ENCODE measurements at regions of chr3 and their contacts with region 1.

Region 1: GRCh38 chr3:73094125-73094524 is 32.7 kb downstream of the EBLN2 start:
- DNase-seq: no peak
- H3K4me3 ChIP-seq: no peak overlapping the region
- H3K27ac ChIP-seq: no peak overlapping the region
- H3K4me1 ChIP-seq: no peaks in the 10 kb centered on the region
- H3K27me3 ChIP-seq: no peaks in the 10 kb centered on the region
- CTCF ChIP-seq: no peak
- EP300 ChIP-seq: no peak
- POLR2A ChIP-seq: no peak

Region 2: DNA sequence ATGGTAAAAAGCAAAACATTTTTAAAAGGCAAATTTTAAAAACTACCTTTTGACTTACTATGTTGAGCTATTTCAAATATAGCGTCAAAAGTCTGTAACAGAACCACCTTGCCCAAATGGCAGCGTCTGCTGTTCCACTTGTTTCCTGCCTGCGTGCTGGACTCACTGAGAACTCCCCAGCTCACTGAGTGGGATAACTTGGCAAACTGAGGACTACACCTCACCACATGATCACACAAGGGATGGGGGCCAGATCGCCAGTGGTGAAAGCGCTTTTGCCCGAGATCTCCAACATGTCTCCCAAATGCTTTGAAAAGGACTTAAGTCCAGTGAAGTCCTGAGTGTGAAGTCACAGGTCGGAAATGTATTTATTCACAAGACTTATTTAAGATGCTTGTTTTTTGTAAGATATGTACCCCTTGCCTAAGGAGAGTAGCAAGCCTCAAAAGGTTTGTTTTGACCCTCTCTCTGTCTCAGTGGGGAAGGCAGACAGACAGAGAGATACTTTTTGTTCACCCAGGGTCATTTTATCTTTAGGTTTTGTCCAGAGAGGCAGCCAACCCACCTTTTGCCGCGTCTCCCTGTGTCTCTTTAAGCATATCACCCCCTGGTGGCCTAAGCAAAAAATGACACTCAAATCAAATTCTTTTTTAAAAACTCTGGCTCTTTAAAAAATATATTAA is 338.0 kb after region 1 on chr3:
- in situ Hi-C with region 1: no loop called
- intact Hi-C with region 1: loop called (anchors 5 kb)
- DNase-seq: no peak
- H3K4me3 ChIP-seq: no peak overlapping the region
- H3K27ac ChIP-seq: peak overlapping the region; percentile 8 to 56 (median 30)
- H3K4me1 ChIP-seq: peaks cover 0 to 31% (median 6%) of the 10 kb centered on the region in 4 donors
- H3K27me3 ChIP-seq: no peaks in the 10 kb centered on the region
- CTCF ChIP-seq: peak; percentile 59 to 72 (median 72)
- EP300 ChIP-seq: no peak
- POLR2A ChIP-seq: no peak

Region 3: GRCh38 chr3:73490453-73491286 is 396.5 kb after region 1 on chr3:
- in situ Hi-C with region 1: loop called in 1 of 4 experiments (anchors 10 kb)
- intact Hi-C with region 1: no loop called
- DNase-seq: no peak
- H3K4me3 ChIP-seq: no peak overlapping the region
- H3K27ac ChIP-seq: no peak overlapping the region
- H3K4me1 ChIP-seq: peaks cover 0 to 22% (median 8%) of the 10 kb centered on the region in 4 donors
- H3K27me3 ChIP-seq: no peaks in the 10 kb centered on the region
- CTCF ChIP-seq: no peak
- EP300 ChIP-seq: no peak
- POLR2A ChIP-seq: no peak